ENCODE measurements at regions of chr7 and their contacts with region 1.

Region 1: GRCh38 chr7:8022628-8023027 is 54.0 kb downstream of the GLCCI1 start:
- DNase-seq: no peak
- H3K4me3 ChIP-seq: no peak overlapping the region
- CTCF ChIP-seq: no peak

Region 2: DNA sequence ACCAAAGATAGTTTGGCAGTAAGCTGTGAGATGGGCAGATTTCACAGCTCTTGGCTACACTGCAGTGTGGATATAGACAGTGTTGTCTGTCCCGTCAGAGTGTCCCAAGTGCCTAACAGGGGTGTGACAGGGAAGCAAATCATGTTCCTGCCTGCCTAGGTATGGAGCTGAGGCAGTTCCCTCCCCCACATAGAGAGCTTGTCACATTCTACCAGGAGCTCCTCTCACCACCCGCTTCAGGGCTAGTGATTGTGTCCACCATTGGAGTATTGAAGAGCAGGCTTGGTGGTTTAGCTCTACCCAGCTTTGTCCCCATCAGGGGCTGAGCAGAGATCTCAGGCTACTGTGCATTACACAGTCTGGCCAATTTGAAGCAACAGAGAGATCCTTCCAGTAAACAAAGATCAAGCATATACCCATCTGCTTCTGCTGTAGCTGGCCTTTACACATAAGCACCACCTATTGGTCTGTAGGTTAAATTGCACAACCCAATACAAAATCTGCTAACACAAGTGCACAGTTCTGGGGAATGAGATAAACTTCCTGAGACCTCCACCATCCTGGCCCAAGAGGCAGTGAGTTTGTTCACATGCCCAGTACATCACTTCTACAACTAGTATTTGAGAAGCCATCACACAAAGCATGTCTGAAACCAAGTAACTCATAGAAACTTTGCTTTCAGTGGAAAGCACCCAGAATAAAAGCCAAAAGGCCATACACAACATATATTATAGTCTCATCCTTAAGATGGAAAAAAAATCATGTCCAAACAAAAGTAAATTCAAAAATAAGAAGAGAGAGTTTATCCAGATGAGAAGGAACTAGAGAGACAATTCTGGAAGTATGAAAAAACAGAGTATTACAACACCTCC is 13.3 kb after region 1 on chr7:
- CTCF ChIA-PET with region 1: interaction called, 16 read pairs
- POLR2A ChIA-PET with region 1: no interaction called
- DNase-seq: no peak
- H3K4me3 ChIP-seq: no peak overlapping the region
- CTCF ChIP-seq: peak; percentile 48

Region 3: DNA sequence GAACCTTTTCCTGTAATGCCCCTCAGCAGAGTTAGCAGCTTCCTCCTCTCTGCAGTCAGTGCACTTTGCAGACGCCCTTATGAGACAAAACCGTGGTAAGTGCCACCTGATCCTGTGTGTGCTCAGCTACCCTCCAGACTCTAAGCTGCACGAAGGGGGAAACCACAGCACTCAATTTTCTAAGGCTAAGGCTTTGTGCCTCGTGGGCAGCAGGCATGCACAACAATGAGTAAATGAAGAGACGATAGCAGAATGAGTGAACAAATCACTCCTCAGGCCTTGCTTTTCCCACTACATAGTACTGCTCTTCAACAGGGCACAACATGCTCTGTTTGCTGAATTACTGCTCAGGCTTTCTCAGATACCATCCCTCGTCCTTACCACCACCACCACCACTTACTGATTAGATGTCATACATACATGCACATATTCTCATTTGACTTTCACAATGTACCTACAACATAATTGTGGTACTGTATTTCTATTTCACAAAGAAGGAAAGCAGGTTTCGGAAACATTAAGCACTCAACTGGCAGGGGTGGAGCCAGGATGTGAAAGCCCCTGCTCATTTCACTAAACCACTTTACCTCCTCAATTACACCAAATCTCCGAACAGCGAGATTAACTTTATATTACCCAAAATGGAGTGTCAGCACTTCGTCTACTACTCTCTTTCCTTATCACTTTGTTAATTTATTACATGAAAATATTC is 153.9 kb after region 1 on chr7:
- CTCF ChIA-PET with region 1: no interaction called
- POLR2A ChIA-PET with region 1: no interaction called
- DNase-seq: no peak
- H3K4me3 ChIP-seq: no peak overlapping the region
- CTCF ChIP-seq: no peak

Measured in AG04449 (cell line).